ENCODE measurements at regions of chr5 and their contacts with region 1.

Region 1: DNA sequence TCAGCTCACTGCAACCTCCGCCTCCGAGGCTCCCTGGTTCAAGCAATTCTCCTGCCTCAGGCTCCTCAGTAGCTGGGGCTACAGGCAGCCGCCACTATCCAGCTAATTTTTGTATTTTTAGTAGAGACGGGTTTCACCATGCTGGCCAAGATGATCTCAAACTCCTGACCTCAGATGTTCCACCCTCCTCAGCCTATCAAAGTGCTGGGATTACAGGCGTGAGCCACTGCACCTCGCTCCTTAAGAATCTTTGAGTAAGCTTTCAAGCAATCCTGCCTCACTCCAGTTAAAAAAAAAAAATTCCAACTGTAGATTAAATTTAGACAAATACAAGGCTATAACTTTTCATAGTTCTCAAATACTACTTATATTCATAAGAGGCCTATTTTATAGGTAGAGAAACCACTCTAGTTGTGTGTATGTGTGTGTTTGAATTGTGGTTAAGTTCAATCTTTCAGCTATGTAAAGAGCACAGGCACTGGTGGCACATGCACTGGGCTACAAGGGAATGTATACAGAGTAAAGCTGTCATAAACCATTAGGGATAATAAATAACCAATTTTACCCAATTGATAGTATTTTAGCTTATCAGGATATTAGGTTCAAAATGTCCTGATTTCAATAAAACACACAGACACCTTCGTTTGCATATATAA is 50.6 kb upstream of the RAPGEF6 start:
- DNase-seq: peak; percentile 30
- ATAC-seq: peak; percentile 62
- H3K4me3 ChIP-seq: no peak overlapping the region
- H3K27ac ChIP-seq: no peak overlapping the region
- H3K4me1 ChIP-seq: peaks cover 4% of the 10 kb centered on the region; the same call in 1 of the 2 replicates
- H3K27me3 ChIP-seq: no peaks in the 10 kb centered on the region
- CTCF ChIP-seq: no peak
- POLR2A ChIP-seq: no peak
- RAD21 ChIP-seq: no peak

Region 2: DNA sequence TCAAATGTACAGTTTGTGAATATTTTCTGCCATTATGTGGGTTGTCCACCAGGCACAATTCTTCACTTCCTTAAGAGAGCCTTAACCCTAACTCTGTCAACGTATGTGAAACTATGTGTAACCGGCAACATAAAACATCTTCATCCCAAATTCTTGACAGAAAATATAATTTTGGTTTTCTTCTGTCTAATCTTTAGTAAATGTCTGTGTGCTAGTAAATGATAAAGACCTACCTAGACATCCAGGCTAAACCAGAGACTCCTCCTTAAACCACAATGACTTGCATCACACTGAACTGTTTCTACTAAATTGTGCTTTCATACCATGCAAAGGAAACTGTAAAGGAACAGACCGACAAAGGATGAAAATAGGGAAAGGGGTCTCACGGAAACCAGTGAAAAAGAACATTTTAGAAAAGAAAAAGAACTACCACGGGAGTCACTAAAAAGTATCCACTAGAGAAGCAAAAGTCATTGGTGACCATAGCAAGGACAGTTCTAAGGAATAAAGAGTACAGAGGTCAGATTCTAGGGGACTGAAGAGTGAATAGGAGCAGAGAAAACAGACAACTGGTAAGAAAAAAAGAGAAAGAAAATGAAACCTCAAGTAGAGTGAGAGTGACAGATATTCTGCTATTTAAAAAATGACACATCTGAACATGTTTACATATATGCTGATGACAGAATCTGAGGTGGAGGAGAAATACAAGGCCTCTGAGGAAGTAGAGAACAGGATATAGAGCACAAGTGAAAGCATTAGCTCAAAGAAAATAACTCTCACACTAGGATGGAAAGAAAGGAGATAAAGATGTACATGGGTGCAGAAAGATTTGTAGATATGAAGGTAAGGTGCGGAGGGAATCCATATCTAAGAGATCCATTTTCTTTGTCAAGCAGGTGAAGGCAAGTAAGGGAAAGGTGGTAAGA is 61.8 kb after region 1 on chr5:
- CTCF ChIA-PET with region 1: no interaction called
- POLR2A ChIA-PET with region 1: interaction called, 12 read pairs
- dilution Hi-C with region 1: no loop called
- in situ Hi-C with region 1: no loop called
- intact Hi-C with region 1: no loop called
- DNase-seq: peak; percentile 48
- ATAC-seq: 0 out of 2 replicates have a peak, but pooled peaks have one; percentile 25
- H3K4me3 ChIP-seq: no peak overlapping the region
- H3K27ac ChIP-seq: no peak overlapping the region
- H3K4me1 ChIP-seq: peaks cover 1% of the 10 kb centered on the region; the same call in 1 of the 2 replicates
- H3K27me3 ChIP-seq: no peaks in the 10 kb centered on the region
- CTCF ChIP-seq: no peak
- POLR2A ChIP-seq: no peak
- RAD21 ChIP-seq: no peak

Region 3: GRCh38 chr5:131846536-131846935 is 160.9 kb after region 1 on chr5:
- CTCF ChIA-PET with region 1: no interaction called
- POLR2A ChIA-PET with region 1: no interaction called
- dilution Hi-C with region 1: no loop called
- in situ Hi-C with region 1: no loop called
- intact Hi-C with region 1: no loop called
- DNase-seq: no peak
- ATAC-seq: no peak
- H3K4me3 ChIP-seq: no peak overlapping the region
- H3K27ac ChIP-seq: no peak overlapping the region
- H3K4me1 ChIP-seq: no peaks in the 10 kb centered on the region
- H3K27me3 ChIP-seq: no peaks in the 10 kb centered on the region
- CTCF ChIP-seq: no peak
- POLR2A ChIP-seq: no peak
- RAD21 ChIP-seq: no peak

Region 4: DNA sequence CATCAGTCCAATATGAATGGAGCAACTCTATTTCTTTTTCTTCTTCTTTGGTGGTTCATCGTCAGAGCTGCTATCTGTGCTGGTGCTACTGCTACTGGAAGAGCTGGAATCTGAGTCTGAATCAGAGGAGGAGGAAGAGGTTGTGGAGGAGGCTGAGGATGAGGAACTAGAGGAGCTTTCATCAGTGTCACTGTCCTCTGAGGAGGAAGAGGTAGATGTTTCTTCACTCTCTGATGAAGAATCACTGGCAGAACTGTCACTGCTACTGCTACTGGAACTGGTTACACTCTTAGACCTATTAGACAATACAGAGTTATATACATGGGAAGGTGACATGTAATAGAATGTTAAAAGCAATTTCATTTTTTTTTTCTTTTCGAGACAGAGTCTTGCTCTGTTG is 1312.9 kb after region 1 on chr5:
- CTCF ChIA-PET with region 1: no interaction called
- POLR2A ChIA-PET with region 1: no interaction called
- dilution Hi-C with region 1: no loop called
- in situ Hi-C with region 1: no loop called
- intact Hi-C with region 1: no loop called
- DNase-seq: no peak
- ATAC-seq: no peak
- H3K4me3 ChIP-seq: no peak overlapping the region
- H3K27ac ChIP-seq: no peak overlapping the region
- H3K4me1 ChIP-seq: no peaks in the 10 kb centered on the region
- H3K27me3 ChIP-seq: no peaks in the 10 kb centered on the region
- CTCF ChIP-seq: no peak
- POLR2A ChIP-seq: no peak
- RAD21 ChIP-seq: no peak

Measured in IMR-90 (cell line).